CD4-positive, alpha-beta memory T cell (primary cell): ENCODE measurements at regions of chr22 and their contacts with region 1.

Region 1: DNA sequence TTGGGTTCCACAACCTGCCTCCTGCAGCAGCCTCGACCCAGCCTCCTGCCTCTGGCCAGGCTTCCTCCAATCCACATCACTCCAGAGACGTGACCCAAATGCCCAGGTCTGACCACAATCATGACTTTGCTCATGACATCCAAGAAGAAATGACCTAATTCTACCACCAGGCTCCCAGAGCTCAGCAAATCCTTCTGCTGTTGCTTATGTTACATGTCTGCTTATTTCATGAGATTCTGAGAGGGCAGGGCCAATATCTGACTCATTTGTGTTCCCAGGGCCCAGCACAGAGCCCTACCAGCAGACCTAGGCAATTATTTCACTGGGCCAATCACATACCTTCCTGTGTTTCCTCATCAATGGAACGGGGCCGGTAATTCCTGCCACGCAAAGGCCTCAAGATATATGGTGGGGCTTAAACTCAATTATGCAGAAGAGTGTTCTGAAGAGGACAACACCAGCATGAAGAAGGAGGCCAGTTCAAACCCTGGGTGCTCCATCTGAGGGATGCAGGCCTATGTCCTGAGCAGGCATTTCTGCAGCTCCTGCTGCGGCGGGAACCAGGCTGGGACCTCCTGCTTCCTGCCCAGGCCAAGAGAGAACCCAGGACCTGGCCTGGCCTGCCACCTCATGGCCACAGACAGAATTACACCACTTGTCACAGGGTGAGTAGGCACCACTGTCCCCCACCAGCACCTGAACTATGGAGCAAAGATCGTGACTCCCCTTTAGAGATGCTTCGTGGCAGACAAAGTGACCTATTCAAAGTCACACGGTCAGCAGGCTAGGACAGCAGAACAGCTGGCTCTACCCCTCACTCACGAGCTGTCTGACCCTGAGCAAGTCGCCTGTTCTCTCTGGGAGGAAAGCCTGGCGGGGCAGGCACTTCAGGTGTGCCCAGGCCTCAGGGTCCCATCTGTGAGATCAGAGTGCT is 5.9 kb downstream of the CENPM start:
- DNase-seq: peak; percentile 86 to 90 (median 89)
- H3K4me3 ChIP-seq: peak overlapping the region in 1 of 2 donors; percentile 41
- H3K4me3 Mint-ChIP-seq: peak overlapping the region; percentile 66 to 98 (median 92)
- H3K27ac ChIP-seq: peak overlapping the region; percentile 95
- H3K27ac Mint-ChIP-seq: peak overlapping the region; percentile 98 to 100 (median 100)
- H3K4me1 ChIP-seq: peaks cover 40% of the 10 kb centered on the region
- H3K4me1 Mint-ChIP-seq: peaks cover 36 to 61% (median 44%) of the 10 kb centered on the region in 4 donors
- H3K27me3 ChIP-seq: no peaks in the 10 kb centered on the region
- H3K27me3 Mint-ChIP-seq: no peaks in the 10 kb centered on the region

Region 2: DNA sequence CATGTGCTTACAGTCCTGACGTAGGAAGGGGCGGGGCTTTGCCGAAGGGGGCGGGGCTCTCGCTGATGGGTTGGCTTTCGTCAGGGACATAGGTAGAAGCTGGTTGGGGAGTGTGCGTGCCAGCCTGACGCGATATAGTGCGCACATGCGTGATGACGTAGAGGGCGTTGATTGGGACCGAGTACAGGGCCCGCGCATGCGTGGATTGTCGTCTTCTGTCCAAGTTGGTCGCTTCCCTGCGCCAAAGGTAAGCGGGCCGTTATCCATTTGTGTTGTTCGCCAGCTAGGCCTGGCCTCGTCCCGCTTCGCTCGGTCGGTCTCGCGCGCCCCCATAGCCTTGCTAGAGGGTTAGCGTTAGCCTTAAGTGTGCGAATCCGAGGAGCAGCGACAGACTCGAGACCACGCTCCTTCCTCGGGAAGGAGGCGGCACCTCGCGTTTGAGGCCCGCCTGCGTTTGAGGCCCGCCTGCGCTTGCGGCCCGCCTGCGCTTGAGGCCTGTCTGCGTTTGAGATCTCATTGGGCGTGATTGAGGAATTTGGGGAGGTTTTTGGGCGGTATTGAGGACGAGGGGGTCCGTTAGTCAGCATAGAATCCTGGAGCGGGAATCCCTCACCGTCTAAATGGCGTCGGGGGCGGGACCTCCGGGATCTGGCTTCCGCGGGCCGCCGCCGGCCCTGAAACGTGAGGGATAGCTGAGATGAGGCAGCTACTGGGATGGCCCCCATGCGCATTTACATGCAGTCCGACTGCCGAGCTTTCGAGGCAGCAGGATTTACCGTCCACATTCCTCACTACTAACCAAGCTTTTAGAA is 319.8 kb before region 1 on chr22 and contains the start of gene XRCC6:
- CTCF ChIA-PET with region 1: no interaction called
- POLR2A ChIA-PET with region 1: interaction called, 7 read pairs
- intact Hi-C with region 1: loop called (anchors 1 kb)
- DNase-seq: peak; percentile 99 to 100 (median 99)
- H3K4me3 ChIP-seq: peak within 1 kb of the TSS; percentile 76 to 90
- H3K4me3 Mint-ChIP-seq: peak within 1 kb of the TSS; percentile 93 to 100 (median 98)
- H3K27ac ChIP-seq: peak within 1 kb of the TSS; percentile 100
- H3K27ac Mint-ChIP-seq: peak within 1 kb of the TSS; percentile 98 to 100 (median 99)
- H3K4me1 ChIP-seq: peaks cover 45% of the 10 kb centered on the region
- H3K4me1 Mint-ChIP-seq: peaks cover 23 to 52% (median 34%) of the 10 kb centered on the region in 4 donors
- H3K27me3 ChIP-seq: no peaks in the 10 kb centered on the region
- H3K27me3 Mint-ChIP-seq: no peaks in the 10 kb centered on the region
- total RNA-seq, gene XRCC6: 174 to 181 TPM

Region 3: DNA sequence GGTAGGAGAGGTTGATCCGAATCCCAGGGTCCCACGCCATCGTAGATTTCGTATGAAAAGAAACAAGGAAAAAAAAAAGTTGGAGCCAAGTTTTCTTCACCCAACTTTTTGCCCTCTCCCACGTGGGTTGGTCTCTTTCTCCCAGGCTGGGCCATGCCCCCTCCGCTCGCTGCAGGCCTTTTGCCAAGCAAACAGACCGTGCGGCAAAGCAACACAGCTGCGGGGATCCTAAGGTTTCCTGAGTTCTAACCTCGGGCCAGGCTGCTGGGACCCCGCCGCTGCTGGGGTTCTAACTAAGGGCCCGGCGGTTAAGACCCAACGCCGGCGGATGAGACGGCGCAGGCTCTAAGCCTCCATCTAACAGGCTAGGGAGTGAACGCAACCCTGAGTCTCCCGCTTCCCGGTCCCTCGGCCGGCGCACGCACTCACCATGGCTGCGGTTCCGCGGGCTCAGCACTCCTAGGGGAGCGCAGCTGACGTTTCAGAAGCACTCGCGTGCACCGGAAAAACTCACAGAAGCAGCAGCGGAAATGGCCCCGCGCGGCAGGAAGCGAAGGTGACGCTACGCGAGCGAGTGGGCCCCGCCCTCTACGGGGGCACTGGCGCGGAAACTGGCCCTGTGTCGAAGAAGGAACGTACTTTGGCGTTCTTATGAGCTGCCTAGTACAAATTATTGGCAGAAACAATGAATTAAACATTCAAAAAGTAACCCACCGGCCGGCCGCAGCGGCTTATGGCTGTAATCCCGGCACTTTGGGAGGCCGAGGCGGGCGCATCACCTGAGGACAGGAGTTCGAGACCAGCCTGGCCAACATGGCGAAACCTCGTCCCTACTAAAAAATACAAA is 252.5 kb before region 1 on chr22 and contains the start of gene SNU13:
- CTCF ChIA-PET with region 1: interaction called, 8 read pairs
- POLR2A ChIA-PET with region 1: interaction called, 39 read pairs
- intact Hi-C with region 1: loop called (anchors 2 kb)
- DNase-seq: peak; percentile 91 to 95 (median 92)
- H3K4me3 ChIP-seq: peak within 1 kb of the TSS; percentile 75 to 96
- H3K4me3 Mint-ChIP-seq: peak within 1 kb of the TSS; percentile 94 to 99 (median 97)
- H3K27ac ChIP-seq: peak within 1 kb of the TSS; percentile 95
- H3K27ac Mint-ChIP-seq: peak within 1 kb of the TSS; percentile 95 to 99 (median 98)
- H3K4me1 ChIP-seq: peaks cover 37% of the 10 kb centered on the region
- H3K4me1 Mint-ChIP-seq: peaks cover 21 to 48% (median 33%) of the 10 kb centered on the region in 4 donors
- H3K27me3 ChIP-seq: no peaks in the 10 kb centered on the region
- H3K27me3 Mint-ChIP-seq: no peaks in the 10 kb centered on the region
- total RNA-seq, gene SNU13: 123 to 129 TPM

Region 4: DNA sequence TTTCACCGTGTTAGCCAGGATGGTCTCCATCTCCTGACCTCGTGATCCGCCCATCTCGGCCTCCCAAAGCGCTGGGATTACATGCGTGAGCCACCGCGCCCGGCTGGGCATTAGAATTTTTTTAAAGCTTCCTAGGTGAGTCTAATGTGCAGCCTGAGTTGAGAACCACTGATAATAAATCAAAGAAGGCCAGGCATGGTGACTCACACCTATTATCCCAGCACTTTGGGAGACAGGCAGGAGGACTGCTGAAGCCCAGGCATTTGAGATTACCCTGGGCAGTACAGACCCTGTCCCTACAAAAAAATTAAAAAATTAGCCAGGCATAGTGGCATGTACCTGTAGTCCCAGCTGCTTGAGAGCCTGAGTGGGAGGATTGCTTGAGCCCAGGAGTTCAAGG is 228.1 kb before region 1 on chr22:
- CTCF ChIA-PET with region 1: no interaction called
- POLR2A ChIA-PET with region 1: no interaction called
- intact Hi-C with region 1: no loop called
- DNase-seq: no peak
- H3K4me3 ChIP-seq: no peak overlapping the region
- H3K4me3 Mint-ChIP-seq: no peak overlapping the region
- H3K27ac ChIP-seq: no peak overlapping the region
- H3K27ac Mint-ChIP-seq: no peak overlapping the region
- H3K4me1 ChIP-seq: no peaks in the 10 kb centered on the region
- H3K4me1 Mint-ChIP-seq: no peaks in the 10 kb centered on the region
- H3K27me3 ChIP-seq: no peaks in the 10 kb centered on the region
- H3K27me3 Mint-ChIP-seq: no peaks in the 10 kb centered on the region

Region 5: DNA sequence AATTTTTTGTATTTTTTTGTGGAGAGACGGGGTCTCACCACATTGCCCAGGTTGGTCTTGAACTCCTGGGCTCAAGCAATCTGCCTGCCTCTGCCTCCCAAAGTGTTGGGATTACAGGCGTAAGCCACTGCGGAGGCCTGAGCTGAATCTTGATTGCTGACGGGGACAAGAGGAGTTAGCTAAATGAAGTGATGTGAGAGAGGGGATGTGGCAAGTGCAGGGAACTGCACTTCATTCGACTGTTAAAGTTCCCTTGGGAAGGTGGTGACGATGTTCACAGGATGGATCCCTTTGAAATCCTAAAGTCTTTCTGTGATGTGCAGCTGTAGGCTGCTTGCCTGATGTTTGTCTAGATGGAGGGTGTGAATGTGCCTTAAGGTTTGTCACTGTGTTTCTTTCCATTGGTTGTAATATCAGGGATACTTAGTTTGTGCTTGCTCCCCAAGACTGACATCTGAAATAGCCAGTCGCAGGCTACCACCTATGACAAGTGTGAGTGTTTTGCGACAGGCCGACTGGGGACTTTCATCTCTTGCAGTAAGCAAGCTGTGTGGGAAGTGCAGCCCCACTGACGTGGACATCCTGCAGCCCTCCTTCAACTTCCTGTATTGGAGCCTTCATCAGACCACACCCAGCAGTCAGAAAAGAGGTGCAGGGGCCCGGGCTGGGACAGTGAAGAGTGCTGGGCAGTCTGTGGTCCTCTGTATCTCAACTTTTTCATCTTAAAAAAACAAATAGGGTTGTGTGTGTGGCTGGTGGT is 160.2 kb before region 1 on chr22:
- CTCF ChIA-PET with region 1: interaction called, 18 read pairs
- POLR2A ChIA-PET with region 1: interaction called, 77 read pairs
- intact Hi-C with region 1: loop called (anchors 1 kb)
- DNase-seq: peak; percentile 90 to 99 (median 95)
- H3K4me3 ChIP-seq: peak overlapping the region; percentile 88 to 92
- H3K4me3 Mint-ChIP-seq: peak overlapping the region; percentile 88 to 94 (median 90)
- H3K27ac ChIP-seq: peak overlapping the region; percentile 90
- H3K27ac Mint-ChIP-seq: peak overlapping the region; percentile 92 to 100 (median 99)
- H3K4me1 ChIP-seq: peaks cover 50% of the 10 kb centered on the region
- H3K4me1 Mint-ChIP-seq: peaks cover 29 to 53% (median 40%) of the 10 kb centered on the region in 4 donors
- H3K27me3 ChIP-seq: no peaks in the 10 kb centered on the region
- H3K27me3 Mint-ChIP-seq: no peaks in the 10 kb centered on the region

Region 6: DNA sequence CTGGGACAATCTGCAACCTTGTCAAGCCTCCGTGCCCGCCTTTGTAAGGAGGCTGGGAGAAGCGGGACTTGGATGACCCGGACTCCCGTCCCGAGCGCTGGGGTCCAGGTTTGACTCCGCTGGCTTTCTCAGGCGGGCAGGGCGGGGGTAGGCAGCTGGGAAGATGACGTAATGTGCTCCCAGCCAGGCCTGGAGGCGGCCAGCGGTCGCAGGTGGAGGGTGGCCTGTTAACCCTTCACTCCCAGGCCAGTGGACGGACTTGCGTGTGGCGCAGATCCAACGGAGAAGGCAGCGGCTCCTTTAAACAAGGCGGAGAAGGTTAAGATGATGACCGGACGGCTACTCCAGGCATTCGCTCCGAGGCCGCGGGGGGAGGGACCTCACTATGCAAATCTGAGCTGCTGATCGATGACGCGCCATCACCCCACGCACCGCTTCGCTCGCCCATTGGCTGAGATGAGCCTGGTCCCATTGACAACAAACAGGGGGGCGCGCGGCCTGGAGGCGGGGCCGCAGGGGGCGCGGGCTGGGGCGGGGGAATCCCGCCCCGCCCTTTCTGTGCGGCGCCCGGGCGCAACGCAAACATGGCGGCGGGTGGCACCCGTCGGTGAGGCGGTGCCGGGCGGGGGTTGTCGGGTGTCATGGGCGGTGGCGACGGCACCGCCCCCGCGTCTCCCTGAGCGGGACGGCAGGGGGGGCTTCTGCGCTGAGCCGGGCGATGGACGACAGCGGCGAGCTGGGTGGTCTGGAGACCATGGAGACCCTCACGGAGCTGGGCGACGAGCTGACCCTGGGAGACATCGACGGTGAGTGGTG is 108.3 kb before region 1 on chr22 and contains the start of gene SREBF2:
- CTCF ChIA-PET with region 1: interaction called, 30 read pairs
- POLR2A ChIA-PET with region 1: interaction called, 139 read pairs
- intact Hi-C with region 1: loop called (anchors 1 kb)
- DNase-seq: peak; percentile 97 to 99 (median 98)
- H3K4me3 ChIP-seq: peak within 1 kb of the TSS; percentile 36 to 93
- H3K4me3 Mint-ChIP-seq: peak within 1 kb of the TSS; percentile 92 to 97 (median 95)
- H3K27ac ChIP-seq: peak within 1 kb of the TSS; percentile 84
- H3K27ac Mint-ChIP-seq: peak within 1 kb of the TSS; percentile 98 to 100 (median 99)
- H3K4me1 ChIP-seq: peaks cover 26% of the 10 kb centered on the region
- H3K4me1 Mint-ChIP-seq: peaks cover 21 to 46% (median 31%) of the 10 kb centered on the region in 4 donors
- H3K27me3 ChIP-seq: no peaks in the 10 kb centered on the region
- H3K27me3 Mint-ChIP-seq: no peaks in the 10 kb centered on the region
- total RNA-seq, gene SREBF2: 109 to 112 TPM

Region 7: GRCh38 chr22:41919357-41920224 is 21.5 kb before region 1 on chr22:
- CTCF ChIA-PET with region 1: interaction called, 115 read pairs
- POLR2A ChIA-PET with region 1: interaction called, 223 read pairs
- intact Hi-C with region 1: no loop called
- DNase-seq: peak in 3 of 5 donors; percentile 29 to 50 (median 36)
- H3K4me3 ChIP-seq: peak overlapping the region; percentile 22 to 34
- H3K4me3 Mint-ChIP-seq: peak overlapping the region; percentile 67 to 83 (median 72)
- H3K27ac ChIP-seq: peak overlapping the region; percentile 29
- H3K27ac Mint-ChIP-seq: peak overlapping the region in 3 of 7 donors; percentile 29 to 53 (median 31)
- H3K4me1 ChIP-seq: peaks cover 28% of the 10 kb centered on the region
- H3K4me1 Mint-ChIP-seq: peaks cover 5 to 25% (median 17%) of the 10 kb centered on the region in 4 donors
- H3K27me3 ChIP-seq: no peaks in the 10 kb centered on the region
- H3K27me3 Mint-ChIP-seq: peaks cover 2 to 8% of the 10 kb centered on the region in 2 donors

Region 8: DNA sequence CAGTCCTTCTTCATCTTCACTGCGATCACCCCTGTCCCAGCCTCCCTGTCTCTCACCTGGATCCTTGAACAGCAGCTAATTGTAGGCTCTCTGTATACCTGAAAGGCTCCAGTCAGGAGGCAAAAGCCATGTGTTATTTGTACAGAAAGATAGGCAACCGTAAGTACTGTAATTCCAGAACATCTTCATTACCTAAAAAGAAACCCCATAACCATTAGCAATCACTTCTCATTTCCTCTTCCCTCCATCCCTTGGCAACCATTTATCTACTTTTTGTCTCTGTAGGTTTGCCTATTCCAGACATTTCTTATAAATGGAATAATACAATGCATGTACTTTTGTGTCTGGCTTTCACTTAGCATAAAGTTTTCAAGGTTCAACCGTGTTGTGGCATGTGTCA is 111.7 kb after region 1 on chr22:
- CTCF ChIA-PET with region 1: no interaction called
- POLR2A ChIA-PET with region 1: no interaction called
- intact Hi-C with region 1: no loop called
- DNase-seq: no peak
- H3K4me3 ChIP-seq: no peak overlapping the region
- H3K4me3 Mint-ChIP-seq: no peak overlapping the region
- H3K27ac ChIP-seq: no peak overlapping the region
- H3K27ac Mint-ChIP-seq: peak overlapping the region in 1 of 7 donors; percentile 69
- H3K4me1 ChIP-seq: no peaks in the 10 kb centered on the region
- H3K4me1 Mint-ChIP-seq: no peaks in the 10 kb centered on the region
- H3K27me3 ChIP-seq: no peaks in the 10 kb centered on the region
- H3K27me3 Mint-ChIP-seq: no peaks in the 10 kb centered on the region